Endothelial cell of umbilical vein (primary cell): ENCODE measurements at regions of chr13 and their contacts with region 1.

Region 1: DNA sequence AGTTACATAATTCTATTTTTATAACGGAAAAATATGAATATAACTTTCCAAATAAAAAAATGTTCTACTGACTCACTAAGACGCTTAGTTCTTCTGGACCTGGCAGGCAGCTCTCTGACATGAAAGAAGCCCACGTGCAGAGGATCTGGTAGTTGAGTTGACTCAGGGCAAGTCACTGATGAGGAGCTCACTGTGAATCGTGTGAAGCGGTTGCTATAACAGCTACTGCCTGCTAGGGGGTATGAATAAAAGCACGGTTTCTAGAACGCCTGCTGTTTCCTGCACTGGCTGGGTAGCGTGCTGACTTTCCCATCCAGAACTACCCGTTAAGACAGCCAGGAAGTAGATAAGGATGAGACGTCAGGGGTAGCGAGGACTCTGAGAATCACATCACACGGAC is 54.7 kb upstream of the WASF3 start:
- DNase-seq: peak; percentile 58
- H3K4me3 ChIP-seq: no peak overlapping the region
- H3K27ac ChIP-seq: no peak overlapping the region
- H3K4me1 ChIP-seq: peaks cover 7% of the 10 kb centered on the region
- H3K27me3 ChIP-seq: no peaks in the 10 kb centered on the region
- CTCF ChIP-seq: peak in 1 of 2 donors; percentile 29
- POLR2A ChIP-seq: no peak

Region 2: GRCh38 chr13:26482451-26483197 is 20.2 kb before region 1 on chr13:
- CTCF ChIA-PET with region 1: interaction called, 32 read pairs
- POLR2A ChIA-PET with region 1: no interaction called
- dilution Hi-C with region 1: no loop called
- intact Hi-C with region 1: no loop called
- DNase-seq: peak; percentile 79
- H3K4me3 ChIP-seq: peak overlapping the region in 1 of 3 experiments; percentile 40
- H3K27ac ChIP-seq: no peak overlapping the region
- H3K4me1 ChIP-seq: peaks cover 2% of the 10 kb centered on the region
- H3K27me3 ChIP-seq: no peaks in the 10 kb centered on the region
- CTCF ChIP-seq: peak; percentile 80 to 85
- POLR2A ChIP-seq: no peak

Region 3: GRCh38 chr13:26584713-26585112 is 81.9 kb after region 1 on chr13:
- CTCF ChIA-PET with region 1: interaction called, 3 read pairs
- POLR2A ChIA-PET with region 1: no interaction called
- dilution Hi-C with region 1: no loop called
- intact Hi-C with region 1: loop called (anchors 5 kb)
- DNase-seq: peak; percentile 96
- H3K4me3 ChIP-seq: peak overlapping the region in 1 of 3 experiments; percentile 3
- H3K27ac ChIP-seq: peak overlapping the region; percentile 82
- H3K4me1 ChIP-seq: peaks cover 68% of the 10 kb centered on the region
- H3K27me3 ChIP-seq: no peaks in the 10 kb centered on the region
- CTCF ChIP-seq: no peak
- POLR2A ChIP-seq: no peak

Region 4: GRCh38 chr13:26601669-26602068 is 98.8 kb after region 1 on chr13:
- CTCF ChIA-PET with region 1: interaction called, 7 read pairs
- POLR2A ChIA-PET with region 1: no interaction called
- dilution Hi-C with region 1: no loop called
- intact Hi-C with region 1: loop called (anchors 5 kb)
- DNase-seq: peak; percentile 79
- H3K4me3 ChIP-seq: no peak overlapping the region
- H3K27ac ChIP-seq: no peak overlapping the region
- H3K4me1 ChIP-seq: peaks cover 19% of the 10 kb centered on the region
- H3K27me3 ChIP-seq: no peaks in the 10 kb centered on the region
- CTCF ChIP-seq: peak in 1 of 2 donors; percentile 17
- POLR2A ChIP-seq: no peak

Region 5: GRCh38 chr13:26628706-26629105 is 125.9 kb after region 1 on chr13:
- CTCF ChIA-PET with region 1: interaction called, 4 read pairs
- POLR2A ChIA-PET with region 1: no interaction called
- dilution Hi-C with region 1: no loop called
- intact Hi-C with region 1: loop called (anchors 5 kb)
- DNase-seq: peak; percentile 38
- H3K4me3 ChIP-seq: no peak overlapping the region
- H3K27ac ChIP-seq: no peak overlapping the region
- H3K4me1 ChIP-seq: no peaks in the 10 kb centered on the region
- H3K27me3 ChIP-seq: no peaks in the 10 kb centered on the region
- CTCF ChIP-seq: peak; percentile 16 to 26
- POLR2A ChIP-seq: no peak